HEK293 (cell line): ENCODE measurements at regions of chr17 and their contacts with region 1.

Region 1: DNA sequence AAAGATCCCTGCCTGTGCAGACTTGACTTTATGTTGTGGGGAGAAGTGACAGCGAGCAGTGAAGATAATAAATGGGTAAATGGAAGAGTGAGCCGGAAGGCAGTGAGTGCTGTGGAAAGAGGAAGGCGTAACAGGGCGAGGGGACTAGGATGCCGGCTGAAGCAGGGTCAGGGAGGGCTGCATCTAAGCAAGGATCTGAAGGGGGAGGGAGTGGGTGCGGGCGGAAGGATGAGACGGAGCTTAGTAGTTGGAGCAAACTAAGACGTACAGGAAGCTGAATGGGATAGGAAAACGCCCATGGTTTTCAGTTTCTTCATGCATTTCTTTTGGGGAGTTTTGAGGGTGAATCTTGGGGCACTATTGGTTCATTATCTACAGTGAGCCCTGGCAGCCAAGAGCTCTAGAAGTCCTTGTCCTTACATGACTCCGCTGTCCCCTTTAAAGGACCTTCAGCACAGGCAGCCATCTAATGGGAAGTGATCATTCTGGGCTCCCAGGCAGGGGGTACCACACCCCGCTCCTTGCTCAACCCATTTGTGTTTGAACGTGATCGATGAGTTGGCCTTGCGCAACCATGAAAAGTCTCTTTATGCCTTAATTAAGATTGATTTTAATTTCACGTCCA is 10.4 kb upstream of the NAT9 start:
- H3K4me3 ChIP-seq: no peak overlapping the region
- H3K27ac ChIP-seq: no peak overlapping the region
- H3K4me1 ChIP-seq: no peaks in the 10 kb centered on the region
- CTCF ChIP-seq: no peak

Region 2: DNA sequence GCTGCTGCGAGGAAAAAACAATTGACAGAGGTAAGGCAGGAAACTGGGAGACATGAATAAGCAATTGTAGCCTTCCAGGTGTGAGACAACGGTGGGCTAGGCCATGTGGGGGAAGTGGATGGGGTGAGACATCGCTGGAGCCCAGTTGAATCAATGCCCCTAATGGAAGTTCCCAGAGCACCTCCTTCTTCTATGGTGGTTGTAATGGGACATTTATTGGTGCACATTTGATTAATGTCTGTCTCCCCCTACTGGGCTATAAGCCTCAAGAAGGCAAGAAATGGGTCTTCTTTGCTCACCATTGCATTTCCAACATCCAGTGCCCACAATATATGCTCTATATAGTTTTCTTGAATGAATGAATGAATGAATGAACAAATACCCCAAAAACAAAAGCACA is 140.3 kb before region 1 on chr17:
- CTCF ChIA-PET with region 1: no interaction called
- POLR2A ChIA-PET with region 1: no interaction called
- H3K4me3 ChIP-seq: no peak overlapping the region
- H3K27ac ChIP-seq: no peak overlapping the region
- H3K4me1 ChIP-seq: no peaks in the 10 kb centered on the region
- CTCF ChIP-seq: no peak

Region 3: GRCh38 chr17:74748529-74749365 is 37.8 kb before region 1 on chr17 and contains the start of gene NHERF1:
- CTCF ChIA-PET with region 1: interaction called, 62 read pairs
- POLR2A ChIA-PET with region 1: no interaction called
- H3K4me3 ChIP-seq: peak within 1 kb of the TSS; percentile 81
- H3K27ac ChIP-seq: peak within 1 kb of the TSS; percentile 68; the same call in 1 of the 2 replicates
- H3K4me1 ChIP-seq: peaks cover 7% of the 10 kb centered on the region
- CTCF ChIP-seq: peak; percentile 100

Region 4: GRCh38 chr17:74776044-74776977 is 10.2 kb before region 1 on chr17 and contains the start of gene NAT9:
- CTCF ChIA-PET with region 1: interaction called, 120 read pairs
- POLR2A ChIA-PET with region 1: no interaction called
- H3K4me3 ChIP-seq: peak within 1 kb of the TSS; percentile 84
- H3K27ac ChIP-seq: peak within 1 kb of the TSS; percentile 50
- H3K4me1 ChIP-seq: peaks cover 3% of the 10 kb centered on the region; the same call in 1 of the 2 replicates
- CTCF ChIP-seq: no peak

Region 5: GRCh38 chr17:74815550-74816370 is 29.2 kb after region 1 on chr17:
- CTCF ChIA-PET with region 1: interaction called, 38 read pairs
- POLR2A ChIA-PET with region 1: no interaction called
- H3K4me3 ChIP-seq: no peak overlapping the region
- H3K27ac ChIP-seq: no peak overlapping the region
- H3K4me1 ChIP-seq: no peaks in the 10 kb centered on the region
- CTCF ChIP-seq: no peak

Region 6: GRCh38 chr17:74852237-74853047 is 65.9 kb after region 1 on chr17:
- CTCF ChIA-PET with region 1: interaction called, 338 read pairs
- POLR2A ChIA-PET with region 1: interaction called, 3 read pairs
- H3K4me3 ChIP-seq: peak overlapping the region; percentile 28
- H3K27ac ChIP-seq: no peak overlapping the region
- H3K4me1 ChIP-seq: peaks cover 5% of the 10 kb centered on the region; the same call in 1 of the 2 replicates
- CTCF ChIP-seq: no peak

Region 7: DNA sequence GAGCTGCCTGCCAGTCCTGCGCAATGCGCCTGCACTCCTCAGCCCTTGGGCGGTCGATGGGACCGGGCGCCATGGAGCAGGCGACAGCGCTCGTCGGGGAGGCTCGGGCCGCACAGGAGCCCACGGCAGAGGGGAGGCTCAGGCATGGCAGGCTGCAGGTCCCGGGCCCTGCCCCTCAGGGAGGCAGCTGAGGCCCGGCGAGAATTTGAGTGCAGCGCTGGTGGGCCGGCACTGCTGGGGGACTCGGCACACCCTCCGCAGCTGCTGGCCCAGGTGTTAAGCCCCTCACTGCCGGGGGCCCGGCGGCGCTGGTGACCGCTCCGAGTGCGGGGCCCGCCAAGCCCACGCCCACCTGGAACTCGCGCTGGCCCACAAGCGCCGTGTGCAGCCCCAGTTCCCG is 120.5 kb after region 1 on chr17:
- CTCF ChIA-PET with region 1: no interaction called
- POLR2A ChIA-PET with region 1: no interaction called
- H3K4me3 ChIP-seq: no peak overlapping the region
- H3K27ac ChIP-seq: no peak overlapping the region
- H3K4me1 ChIP-seq: no peaks in the 10 kb centered on the region
- CTCF ChIP-seq: no peak

Region 8: DNA sequence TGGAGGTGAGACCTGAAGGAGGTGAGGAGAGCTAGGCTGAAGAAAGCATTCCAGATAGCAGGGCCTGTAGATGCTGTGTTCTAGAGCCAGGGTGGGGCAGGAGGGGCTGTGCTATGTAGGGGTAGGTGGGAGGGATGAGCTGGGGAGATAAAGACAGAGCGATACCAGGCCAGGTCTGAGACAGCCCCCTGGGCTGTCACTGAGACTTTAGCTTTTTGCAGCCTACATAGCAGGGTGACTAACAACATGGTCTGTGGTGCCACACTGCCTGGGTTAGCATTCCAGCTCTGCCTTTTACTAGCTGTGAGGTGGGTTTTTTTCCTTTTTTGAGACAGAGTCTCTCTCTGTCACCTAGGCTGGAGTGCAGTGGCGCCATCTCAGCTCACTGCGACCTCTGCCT is 433.3 kb after region 1 on chr17:
- CTCF ChIA-PET with region 1: no interaction called
- POLR2A ChIA-PET with region 1: no interaction called
- H3K4me3 ChIP-seq: no peak overlapping the region
- H3K27ac ChIP-seq: no peak overlapping the region
- H3K4me1 ChIP-seq: no peaks in the 10 kb centered on the region
- CTCF ChIP-seq: no peak